ENCODE measurements at regions of chrX and their contacts with region 1.

Region 1: GRCh38 chrX:153599192-153600031 is 473 bp upstream of the CCNQ start:
- DNase-seq: peak; percentile 62 to 92 (median 80)
- ATAC-seq: peak; percentile 84
- H3K4me3 ChIP-seq: peak overlapping the region; percentile 68 to 70
- H3K4me3 Mint-ChIP-seq: peak overlapping the region; percentile 84
- H3K27ac ChIP-seq: peak overlapping the region; percentile 37 to 56
- H3K27ac Mint-ChIP-seq: no peak overlapping the region
- H3K4me1 ChIP-seq: peaks cover 24% of the 10 kb centered on the region
- H3K4me1 Mint-ChIP-seq: peaks cover 47% of the 10 kb centered on the region
- H3K27me3 ChIP-seq: no peaks in the 10 kb centered on the region
- H3K27me3 Mint-ChIP-seq: no peaks in the 10 kb centered on the region
- CTCF ChIP-seq: no peak

Region 2: GRCh38 chrX:153333768-153334645 is 265.4 kb before region 1 on chrX and contains the start of gene ZNF275:
- CTCF ChIA-PET with region 1: no interaction called
- POLR2A ChIA-PET with region 1: no interaction called
- intact Hi-C with region 1: loop called in 1 of 2 experiments (anchors 5 kb)
- DNase-seq: peak; percentile 56 to 90 (median 78)
- ATAC-seq: peak; percentile 97
- H3K4me3 ChIP-seq: peak within 1 kb of the TSS; percentile 61 to 76
- H3K4me3 Mint-ChIP-seq: peak within 1 kb of the TSS; percentile 82
- H3K27ac ChIP-seq: peak within 1 kb of the TSS in 1 of 2 experiments; percentile 68
- H3K27ac Mint-ChIP-seq: peak within 1 kb of the TSS; percentile 79
- H3K4me1 ChIP-seq: peaks cover 40% of the 10 kb centered on the region
- H3K4me1 Mint-ChIP-seq: peaks cover 46% of the 10 kb centered on the region
- H3K27me3 ChIP-seq: no peaks in the 10 kb centered on the region
- H3K27me3 Mint-ChIP-seq: peaks cover under 1% of the 10 kb centered on the region
- CTCF ChIP-seq: no peak
- total RNA-seq, gene ZNF275: 11.3 to 11.6 TPM

Region 3: DNA sequence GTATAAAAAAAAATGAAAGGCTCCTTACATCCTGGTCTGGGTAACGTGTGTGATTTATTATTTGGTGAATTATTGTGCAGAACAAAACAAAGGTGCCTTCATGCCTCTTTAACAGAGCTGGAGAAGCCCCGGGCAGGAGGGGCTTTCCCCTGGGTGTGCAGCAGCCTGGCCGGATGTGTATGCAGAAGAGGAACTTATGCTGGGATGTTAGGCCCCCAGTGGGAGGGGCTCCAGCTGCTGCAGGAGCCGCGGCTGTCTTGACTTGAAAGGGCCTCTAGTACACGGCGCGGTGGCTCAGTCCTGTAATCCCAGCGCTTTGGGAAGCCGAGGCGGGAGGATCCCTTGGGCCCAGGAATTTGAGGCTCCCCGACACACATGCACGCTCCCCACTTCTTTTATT is 16.5 kb before region 1 on chrX:
- CTCF ChIA-PET with region 1: no interaction called
- POLR2A ChIA-PET with region 1: interaction called, 5 read pairs
- intact Hi-C with region 1: loop called (anchors 2 kb)
- DNase-seq: peak; percentile 22 to 88 (median 63)
- ATAC-seq: peak; percentile 100
- H3K4me3 ChIP-seq: no peak overlapping the region
- H3K4me3 Mint-ChIP-seq: peak overlapping the region; percentile 66
- H3K27ac ChIP-seq: no peak overlapping the region
- H3K27ac Mint-ChIP-seq: peak overlapping the region; percentile 45
- H3K4me1 ChIP-seq: peaks cover 19% of the 10 kb centered on the region
- H3K4me1 Mint-ChIP-seq: peaks cover 21% of the 10 kb centered on the region
- H3K27me3 ChIP-seq: no peaks in the 10 kb centered on the region
- H3K27me3 Mint-ChIP-seq: no peaks in the 10 kb centered on the region
- CTCF ChIP-seq: no peak

Region 4: DNA sequence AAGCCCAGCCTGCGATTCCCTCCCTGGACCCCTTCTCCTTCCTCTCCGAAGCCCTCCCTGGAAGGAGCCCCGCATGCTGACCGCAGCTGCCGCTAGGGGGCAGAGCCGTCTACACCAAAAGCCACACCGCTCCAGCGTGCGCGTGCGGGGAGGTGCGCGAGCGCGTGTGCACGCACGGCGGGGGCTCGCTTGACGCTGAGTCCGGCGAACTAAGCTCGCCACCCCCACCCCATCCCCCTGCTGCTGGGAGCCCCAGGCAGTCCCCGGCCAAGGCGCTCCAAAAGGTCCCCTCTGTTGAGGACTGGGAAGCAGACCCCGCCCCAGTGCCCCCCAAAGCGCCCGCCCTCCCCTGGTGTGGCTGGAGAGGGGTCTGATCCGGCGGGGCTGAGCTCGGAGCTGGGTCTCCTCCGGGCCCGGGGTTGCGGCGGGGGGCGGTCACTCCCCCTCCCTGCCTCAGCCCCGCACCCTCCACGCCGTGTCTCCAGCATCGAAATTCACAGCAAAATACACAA is 10.6 kb after region 1 on chrX:
- CTCF ChIA-PET with region 1: interaction called, 20 read pairs
- POLR2A ChIA-PET with region 1: interaction called, 10 read pairs
- intact Hi-C with region 1: loop called in 1 of 2 experiments (anchors 1 kb)
- DNase-seq: peak; percentile 57 to 87 (median 77)
- ATAC-seq: peak; percentile 89
- H3K4me3 ChIP-seq: peak overlapping the region; percentile 44 to 58
- H3K4me3 Mint-ChIP-seq: peak overlapping the region; percentile 87
- H3K27ac ChIP-seq: no peak overlapping the region
- H3K27ac Mint-ChIP-seq: peak overlapping the region; percentile 77
- H3K4me1 ChIP-seq: peaks cover 12% of the 10 kb centered on the region
- H3K4me1 Mint-ChIP-seq: peaks cover 18% of the 10 kb centered on the region
- H3K27me3 ChIP-seq: no peaks in the 10 kb centered on the region
- H3K27me3 Mint-ChIP-seq: no peaks in the 10 kb centered on the region
- CTCF ChIP-seq: peak; percentile 59

Region 5: DNA sequence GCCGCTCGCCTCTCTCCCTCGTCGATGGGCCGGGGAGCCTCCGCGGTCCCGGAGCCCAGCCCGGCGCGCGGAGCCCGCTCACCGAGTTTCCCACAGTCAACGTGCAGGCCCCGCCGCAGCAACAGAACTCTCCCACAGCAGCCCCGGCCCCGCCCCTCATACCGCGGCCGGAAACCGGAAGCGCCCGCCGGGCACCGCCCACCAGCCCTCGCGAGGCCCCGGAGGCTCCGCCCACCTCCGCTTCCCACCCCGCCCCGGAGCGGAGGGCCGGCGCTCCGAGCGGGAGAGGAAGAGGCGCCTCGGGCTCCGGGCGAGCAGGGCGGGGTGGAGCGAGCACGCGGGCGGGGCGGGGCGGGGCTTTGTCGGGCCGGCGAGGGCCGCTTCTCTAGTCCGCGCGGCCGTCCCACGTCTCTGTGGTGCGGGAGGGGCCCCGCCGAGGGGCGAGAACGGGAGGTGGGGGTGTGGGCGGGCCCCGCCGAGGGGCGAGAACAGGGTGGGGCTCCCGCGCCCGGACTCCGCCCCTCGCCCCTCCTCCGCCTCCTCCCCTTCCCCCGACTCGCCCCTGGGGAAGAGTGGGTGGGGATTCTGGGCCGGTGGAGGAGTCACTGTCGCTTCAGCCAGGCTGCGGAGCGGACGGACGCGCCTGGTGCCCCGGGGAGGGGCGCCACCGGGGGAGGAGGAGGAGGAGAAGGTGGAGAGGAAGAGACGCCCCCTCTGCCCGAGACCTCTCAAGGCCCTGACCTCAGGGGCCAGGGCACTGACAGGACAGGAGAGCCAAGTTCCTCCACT is 125.0 kb after region 1 on chrX and contains the starts of genes ABCD1 and BCAP31:
- CTCF ChIA-PET with region 1: no interaction called
- POLR2A ChIA-PET with region 1: no interaction called
- intact Hi-C with region 1: loop called in 1 of 2 experiments (anchors 5 kb)
- DNase-seq: peak; percentile 78 to 92 (median 86)
- ATAC-seq: peak; percentile 78
- H3K4me3 ChIP-seq: peak within 1 kb of the TSS; percentile 59 to 63
- H3K4me3 Mint-ChIP-seq: peak within 1 kb of the TSS; percentile 84
- H3K27ac ChIP-seq: peak within 1 kb of the TSS; percentile 64 to 81
- H3K27ac Mint-ChIP-seq: peak within 1 kb of the TSS; percentile 83
- H3K4me1 ChIP-seq: peaks cover 31% of the 10 kb centered on the region
- H3K4me1 Mint-ChIP-seq: peaks cover 33% of the 10 kb centered on the region
- H3K27me3 ChIP-seq: no peaks in the 10 kb centered on the region
- H3K27me3 Mint-ChIP-seq: no peaks in the 10 kb centered on the region
- CTCF ChIP-seq: no peak
- total RNA-seq, gene ABCD1: 5.2 to 6.4 TPM
- total RNA-seq, gene BCAP31: 35.3 to 39.1 TPM

Measured in CD8-positive, alpha-beta T cell (primary cell).